ENCODE measurements at regions of chr12 and their contacts with region 1.

Region 1: GRCh38 chr12:51823875-51824565 is 24.5 kb downstream of the FIGNL2 start:
- DNase-seq: peak; percentile 57
- H3K4me3 ChIP-seq: no peak overlapping the region
- H3K27ac ChIP-seq: no peak overlapping the region
- H3K4me1 ChIP-seq: peaks cover 30% of the 10 kb centered on the region
- H3K27me3 ChIP-seq: peaks cover 5% of the 10 kb centered on the region
- CTCF ChIP-seq: peak; percentile 39 to 76

Region 2: DNA sequence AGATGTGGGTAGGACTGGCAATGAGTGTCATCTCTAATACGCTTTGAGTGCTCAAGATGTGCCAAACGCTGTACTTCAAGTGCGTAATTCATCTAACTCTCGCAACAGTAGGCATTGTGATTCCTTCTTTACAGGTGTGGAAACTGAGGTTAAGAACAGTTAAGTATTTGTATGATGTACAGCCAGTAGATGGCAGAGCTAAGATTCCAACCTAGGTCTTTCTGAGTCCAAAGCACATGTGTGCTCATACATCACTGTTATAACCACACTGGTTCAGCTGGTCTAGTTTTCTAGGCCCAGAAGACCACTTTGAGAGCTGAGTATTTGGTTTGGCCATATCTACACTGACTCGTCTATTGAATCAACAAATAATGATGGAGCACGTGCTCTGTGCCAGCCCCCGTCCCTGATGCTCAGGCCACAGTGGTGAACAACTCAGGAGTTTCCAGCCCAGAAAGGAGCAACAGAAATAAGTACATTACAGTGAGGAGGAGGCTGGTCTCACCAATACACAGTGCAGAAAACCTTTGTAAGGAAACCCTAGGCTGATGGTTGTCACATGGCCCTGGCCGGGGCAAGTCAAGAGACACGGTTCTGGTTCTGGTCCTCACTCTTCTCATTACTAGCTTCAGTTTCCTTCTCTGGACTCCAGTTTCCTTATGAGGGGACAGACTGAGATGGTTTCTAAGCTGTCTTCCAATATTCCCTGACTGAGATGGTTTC is 302.3 kb before region 1 on chr12:
- CTCF ChIA-PET with region 1: interaction called, 9 read pairs
- dilution Hi-C with region 1: no loop called
- in situ Hi-C with region 1: loop called in 1 of 2 experiments (anchors 10 kb)
- intact Hi-C with region 1: no loop called
- DNase-seq: no peak
- H3K4me3 ChIP-seq: no peak overlapping the region
- H3K27ac ChIP-seq: no peak overlapping the region
- H3K4me1 ChIP-seq: no peaks in the 10 kb centered on the region
- H3K27me3 ChIP-seq: no peaks in the 10 kb centered on the region
- CTCF ChIP-seq: peak in 1 of 2 donors; percentile 32

Region 3: GRCh38 chr12:51590347-51591019 is 233.5 kb before region 1 on chr12:
- CTCF ChIA-PET with region 1: interaction called, 3 read pairs
- dilution Hi-C with region 1: no loop called
- in situ Hi-C with region 1: no loop called
- intact Hi-C with region 1: loop called (anchors 10 kb)
- DNase-seq: peak; percentile 22
- H3K4me3 ChIP-seq: peak overlapping the region; percentile 44 to 62 (median 57)
- H3K27ac ChIP-seq: no peak overlapping the region
- H3K4me1 ChIP-seq: peaks cover 9% of the 10 kb centered on the region
- H3K27me3 ChIP-seq: peaks cover 3% of the 10 kb centered on the region
- CTCF ChIP-seq: peak; percentile 18 to 49

Region 4: GRCh38 chr12:51678086-51678724 is 145.8 kb before region 1 on chr12:
- CTCF ChIA-PET with region 1: no interaction called
- dilution Hi-C with region 1: no loop called
- in situ Hi-C with region 1: no loop called
- intact Hi-C with region 1: loop called (anchors 2 kb)
- DNase-seq: peak; percentile 31
- H3K4me3 ChIP-seq: no peak overlapping the region
- H3K27ac ChIP-seq: no peak overlapping the region
- H3K4me1 ChIP-seq: peaks cover 1% of the 10 kb centered on the region
- H3K27me3 ChIP-seq: no peaks in the 10 kb centered on the region
- CTCF ChIP-seq: peak; percentile 90 to 93

Region 5: DNA sequence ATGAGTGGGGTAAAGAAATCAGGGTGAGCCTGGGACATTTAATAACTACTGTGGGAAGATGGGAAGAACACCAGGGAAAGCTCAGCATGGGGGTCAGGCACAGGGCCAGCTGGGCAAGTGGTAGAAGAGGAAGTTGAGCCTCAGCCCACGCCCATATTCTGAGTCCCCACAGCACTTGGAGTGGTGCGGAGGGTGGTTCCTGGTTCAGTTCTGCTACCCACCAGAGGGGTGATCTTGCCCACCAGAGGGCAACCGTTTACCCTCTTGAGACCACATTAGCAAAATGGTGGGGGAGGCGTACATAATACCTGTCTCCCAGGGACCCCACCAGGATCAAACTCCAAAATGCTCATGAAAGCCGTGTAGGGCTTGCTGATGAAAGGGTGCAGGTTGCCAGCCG is 47.1 kb after region 1 on chr12:
- CTCF ChIA-PET with region 1: interaction called, 6 read pairs
- dilution Hi-C with region 1: no loop called
- in situ Hi-C with region 1: no loop called
- intact Hi-C with region 1: loop called (anchors 1 kb)
- DNase-seq: no peak
- H3K4me3 ChIP-seq: no peak overlapping the region
- H3K27ac ChIP-seq: no peak overlapping the region
- H3K4me1 ChIP-seq: peaks cover 7% of the 10 kb centered on the region
- H3K27me3 ChIP-seq: peaks cover 21% of the 10 kb centered on the region
- CTCF ChIP-seq: no peak

Measured in mammary epithelial cell (primary cell).